Activated CD4-positive, alpha-beta memory T cell treated with anti-CD3 and anti-CD28 coated beads, Interleukin-2, amount 10 ng/mL, durations not matched to agents 7 days and 5 days (primary cell): ENCODE measurements at regions of chr2 and their contacts with region 1.

Region 1: GRCh38 chr2:75676464-75676863 is 29.9 kb downstream of the MRPL19 start:
- DNase-seq: no peak
- H3K4me3 Mint-ChIP-seq: no peak overlapping the region
- H3K27ac Mint-ChIP-seq: no peak overlapping the region
- H3K4me1 Mint-ChIP-seq: peaks cover 7% of the 10 kb centered on the region
- H3K27me3 Mint-ChIP-seq: no peaks in the 10 kb centered on the region

Region 2: GRCh38 chr2:75199428-75200011 is 476.9 kb before region 1 on chr2 and contains the start of gene TACR1:
- CTCF ChIA-PET with region 1: no interaction called
- POLR2A ChIA-PET with region 1: no interaction called
- DNase-seq: peak; percentile 48
- H3K4me3 Mint-ChIP-seq: peak within 1 kb of the TSS; percentile 46
- H3K27ac Mint-ChIP-seq: no peak within 1 kb of the TSS
- H3K4me1 Mint-ChIP-seq: peaks cover 7% of the 10 kb centered on the region
- H3K27me3 Mint-ChIP-seq: peaks cover 64% of the 10 kb centered on the region
- total RNA-seq, gene TACR1: not detected

Region 3: DNA sequence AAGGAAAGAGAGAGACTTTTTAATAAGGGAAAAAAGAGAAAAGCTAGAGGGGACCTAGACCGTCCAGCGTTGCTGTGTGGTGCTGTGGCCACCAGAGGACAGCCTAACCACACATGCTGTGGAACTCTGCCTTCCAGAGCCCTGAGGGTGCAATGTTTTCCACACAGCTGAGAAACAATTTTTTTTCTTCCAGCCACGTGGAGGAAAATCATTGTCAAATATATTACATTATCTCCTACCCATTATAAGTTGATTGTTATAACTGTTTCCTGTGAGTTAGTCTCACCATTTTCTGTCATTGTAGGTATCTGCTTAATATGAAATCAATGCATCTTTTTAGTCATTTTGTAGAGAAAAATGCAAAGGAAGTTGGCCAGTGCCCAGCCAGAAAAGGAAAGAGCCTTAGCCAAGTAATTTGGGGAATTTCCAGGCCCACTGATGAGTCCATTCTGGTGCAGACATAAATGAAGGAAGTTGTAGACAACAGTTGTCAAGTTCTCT is 35.8 kb before region 1 on chr2:
- CTCF ChIA-PET with region 1: interaction called, 24 read pairs
- POLR2A ChIA-PET with region 1: interaction called, 3 read pairs
- DNase-seq: peak; percentile 51
- H3K4me3 Mint-ChIP-seq: no peak overlapping the region
- H3K27ac Mint-ChIP-seq: no peak overlapping the region
- H3K4me1 Mint-ChIP-seq: no peaks in the 10 kb centered on the region
- H3K27me3 Mint-ChIP-seq: peaks cover 24% of the 10 kb centered on the region

Region 4: DNA sequence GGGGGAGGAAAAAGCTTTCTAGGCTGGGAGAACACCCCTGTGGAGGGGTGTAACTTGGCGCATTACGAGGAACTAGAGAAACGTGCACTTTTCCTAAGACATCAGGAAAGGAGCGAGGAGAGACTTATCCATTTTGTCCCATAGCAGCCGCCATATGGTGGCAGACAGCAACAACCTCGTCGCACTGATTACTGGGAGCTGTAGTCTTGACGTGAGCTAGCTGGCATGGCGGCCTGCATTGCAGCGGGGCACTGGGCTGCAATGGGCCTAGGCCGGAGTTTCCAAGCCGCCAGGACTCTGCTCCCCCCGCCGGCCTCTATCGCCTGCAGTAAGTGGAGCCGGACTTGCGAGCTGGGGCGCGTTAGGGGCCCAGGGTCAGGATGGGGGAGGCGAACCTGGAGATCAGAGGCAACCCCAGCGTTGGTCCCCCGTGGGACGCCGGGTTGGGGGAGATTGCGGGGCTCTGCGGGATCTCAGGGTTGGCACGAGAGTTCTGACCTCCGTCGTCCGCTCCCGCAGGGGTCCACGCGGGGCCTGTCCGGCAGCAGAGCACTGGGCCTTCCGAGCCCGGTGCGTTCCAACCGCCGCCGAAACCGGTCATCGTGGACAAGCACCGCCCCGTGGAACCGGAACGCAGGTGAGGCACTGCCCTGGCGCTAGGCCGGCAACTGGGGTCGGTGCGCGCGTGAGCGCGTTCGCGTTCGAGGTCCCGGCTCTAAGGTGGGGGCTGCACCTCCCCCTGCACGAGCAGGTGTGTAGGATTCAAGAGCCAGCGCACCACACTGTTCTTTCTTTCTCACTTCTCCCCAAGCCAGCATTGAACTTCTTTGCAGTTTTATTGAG is 29.7 kb before region 1 on chr2 and contains the start of gene MRPL19:
- CTCF ChIA-PET with region 1: interaction called, 24 read pairs
- POLR2A ChIA-PET with region 1: interaction called, 3 read pairs
- DNase-seq: peak; percentile 78
- H3K4me3 Mint-ChIP-seq: peak within 1 kb of the TSS; percentile 89
- H3K27ac Mint-ChIP-seq: peak within 1 kb of the TSS; percentile 83
- H3K4me1 Mint-ChIP-seq: peaks cover 27% of the 10 kb centered on the region
- H3K27me3 Mint-ChIP-seq: peaks cover 2% of the 10 kb centered on the region
- total RNA-seq, gene MRPL19: 37.7 to 41.6 TPM

Region 5: GRCh38 chr2:75655861-75656260 is 20.6 kb before region 1 on chr2:
- CTCF ChIA-PET with region 1: interaction called, 10 read pairs
- POLR2A ChIA-PET with region 1: interaction called, 3 read pairs
- DNase-seq: no peak
- H3K4me3 Mint-ChIP-seq: no peak overlapping the region
- H3K27ac Mint-ChIP-seq: no peak overlapping the region
- H3K4me1 Mint-ChIP-seq: no peaks in the 10 kb centered on the region
- H3K27me3 Mint-ChIP-seq: no peaks in the 10 kb centered on the region

Region 6: DNA sequence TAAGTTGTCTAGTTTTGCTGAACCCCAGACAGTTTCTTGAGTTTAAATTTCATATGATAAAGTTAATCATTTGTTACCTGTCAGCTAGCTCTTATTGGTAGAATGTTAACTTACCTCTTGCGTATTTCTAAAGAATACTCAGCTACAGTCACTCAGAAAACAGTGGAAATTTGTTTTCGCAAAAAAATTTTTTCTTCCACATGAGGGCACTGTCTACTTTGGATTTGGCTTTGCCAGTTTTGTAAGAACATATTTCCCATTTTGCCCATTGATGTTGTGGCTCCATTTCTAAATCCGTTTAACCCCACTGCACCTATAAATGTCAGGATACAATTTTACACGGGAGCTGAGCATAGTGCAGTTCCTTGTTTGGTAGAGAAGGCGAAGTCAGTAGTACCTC is 53.4 kb after region 1 on chr2:
- CTCF ChIA-PET with region 1: no interaction called
- POLR2A ChIA-PET with region 1: no interaction called
- DNase-seq: no peak
- H3K4me3 Mint-ChIP-seq: no peak overlapping the region
- H3K27ac Mint-ChIP-seq: no peak overlapping the region
- H3K4me1 Mint-ChIP-seq: no peaks in the 10 kb centered on the region
- H3K27me3 Mint-ChIP-seq: peaks cover 16% of the 10 kb centered on the region